ENCODE measurements at regions of chr16 and their contacts with region 1.

Region 1: GRCh38 chr16:67892899-67893742 is at the start of gene PSKH1:
- DNase-seq: peak; percentile 89 to 96 (median 93)
- ATAC-seq: peak; percentile 99
- H3K4me3 ChIP-seq: peak within 1 kb of the TSS; percentile 81 to 93
- H3K4me3 Mint-ChIP-seq: peak within 1 kb of the TSS; percentile 95
- H3K27ac ChIP-seq: peak within 1 kb of the TSS; percentile 90 to 93
- H3K27ac Mint-ChIP-seq: peak within 1 kb of the TSS; percentile 96
- H3K4me1 ChIP-seq: peaks cover 24% of the 10 kb centered on the region
- H3K4me1 Mint-ChIP-seq: peaks cover 40% of the 10 kb centered on the region
- H3K27me3 ChIP-seq: no peaks in the 10 kb centered on the region
- H3K27me3 Mint-ChIP-seq: no peaks in the 10 kb centered on the region
- CTCF ChIP-seq: no peak
- total RNA-seq, gene PSKH1: 13.3 to 13.4 TPM

Region 2: DNA sequence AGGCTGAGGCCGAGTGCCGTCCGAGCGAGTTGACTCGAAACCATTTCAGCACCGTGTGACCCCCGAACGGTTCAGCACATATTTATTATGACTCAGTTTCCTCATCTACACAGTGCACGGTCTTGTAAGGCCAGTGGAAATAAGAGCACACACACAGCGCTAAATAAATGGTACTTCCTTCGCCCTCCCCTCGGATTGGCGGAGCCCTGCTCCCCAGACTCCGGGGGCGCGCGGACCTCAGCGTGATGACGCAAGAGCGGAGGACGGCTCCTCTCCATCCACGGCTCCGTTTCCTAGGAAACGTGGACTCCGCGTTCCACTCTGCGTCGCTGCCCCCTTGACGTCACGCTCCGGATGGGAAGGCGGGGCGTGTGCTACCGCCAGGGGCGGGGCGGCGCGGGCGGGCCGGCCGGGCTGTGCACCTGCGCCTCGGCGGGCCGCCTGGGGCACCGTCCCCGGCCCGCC is 232.5 kb before region 1 on chr16 and contains the start of gene PARD6A:
- CTCF ChIA-PET with region 1: no interaction called
- POLR2A ChIA-PET with region 1: no interaction called
- intact Hi-C with region 1: loop called in 1 of 2 experiments (anchors 1 kb)
- DNase-seq: peak; percentile 89 to 99 (median 95)
- ATAC-seq: peak; percentile 76
- H3K4me3 ChIP-seq: peak within 1 kb of the TSS; percentile 83 to 100
- H3K4me3 Mint-ChIP-seq: peak within 1 kb of the TSS; percentile 94
- H3K27ac ChIP-seq: peak within 1 kb of the TSS; percentile 92 to 100
- H3K27ac Mint-ChIP-seq: peak within 1 kb of the TSS; percentile 93
- H3K4me1 ChIP-seq: peaks cover 20% of the 10 kb centered on the region
- H3K4me1 Mint-ChIP-seq: peaks cover 23% of the 10 kb centered on the region
- H3K27me3 ChIP-seq: no peaks in the 10 kb centered on the region
- H3K27me3 Mint-ChIP-seq: no peaks in the 10 kb centered on the region
- CTCF ChIP-seq: no peak
- total RNA-seq, gene PARD6A: 3.0 to 3.1 TPM

Region 3: DNA sequence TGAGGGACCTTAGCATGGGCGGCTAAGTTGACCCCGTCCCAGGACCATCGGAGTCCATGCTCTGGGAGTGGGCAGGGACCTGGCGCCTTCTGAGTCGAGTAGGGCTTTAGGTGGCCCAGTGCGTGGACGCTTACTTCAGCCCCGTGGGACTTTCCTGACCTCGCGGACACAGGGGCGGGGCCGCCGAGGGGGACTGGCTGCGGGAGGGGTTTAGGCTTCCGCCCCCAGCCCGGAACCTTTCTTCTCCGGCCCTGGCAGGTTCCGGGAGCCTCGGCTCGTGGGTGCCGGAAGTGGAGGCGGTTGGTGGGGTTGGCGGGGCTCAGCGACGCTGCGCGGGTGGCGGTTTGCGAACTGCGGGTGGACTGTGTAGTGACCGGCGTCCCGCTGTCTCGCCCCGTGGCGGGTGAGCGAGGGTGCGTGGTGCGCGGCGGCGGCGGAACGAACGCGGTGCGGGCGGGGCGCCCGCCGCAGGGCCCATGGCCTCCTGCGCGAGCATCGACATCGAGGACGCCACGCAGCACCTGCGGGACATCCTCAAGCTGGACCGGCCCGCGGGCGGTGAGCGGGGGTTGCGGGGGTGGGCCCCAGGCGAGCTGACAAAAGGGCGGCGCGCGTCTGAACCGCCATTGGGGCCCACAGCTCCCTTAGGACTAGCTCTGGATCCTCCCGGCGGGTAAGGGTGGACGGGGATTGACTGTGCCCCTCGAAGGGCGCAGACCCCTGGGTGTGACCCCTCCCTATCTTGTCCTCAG is 20.2 kb before region 1 on chr16 and contains the start of gene EDC4:
- CTCF ChIA-PET with region 1: no interaction called
- POLR2A ChIA-PET with region 1: interaction called, 3 read pairs
- intact Hi-C with region 1: loop called (anchors 1 to 2 kb)
- DNase-seq: peak; percentile 75 to 94 (median 86)
- ATAC-seq: peak; percentile 92
- H3K4me3 ChIP-seq: peak within 1 kb of the TSS; percentile 87 to 97
- H3K4me3 Mint-ChIP-seq: peak within 1 kb of the TSS; percentile 90
- H3K27ac ChIP-seq: peak within 1 kb of the TSS; percentile 78 to 83
- H3K27ac Mint-ChIP-seq: peak within 1 kb of the TSS; percentile 90
- H3K4me1 ChIP-seq: peaks cover 32% of the 10 kb centered on the region
- H3K4me1 Mint-ChIP-seq: peaks cover 32% of the 10 kb centered on the region
- H3K27me3 ChIP-seq: no peaks in the 10 kb centered on the region
- H3K27me3 Mint-ChIP-seq: no peaks in the 10 kb centered on the region
- CTCF ChIP-seq: no peak
- total RNA-seq, gene EDC4: 154 to 169 TPM

Region 4: GRCh38 chr16:67968400-67969253 is 75.5 kb after region 1 on chr16 and contains the start of gene SLC12A4:
- CTCF ChIA-PET with region 1: no interaction called
- POLR2A ChIA-PET with region 1: no interaction called
- intact Hi-C with region 1: loop called (anchors 1 to 2 kb)
- DNase-seq: peak; percentile 66 to 93 (median 86)
- ATAC-seq: peak; percentile 90
- H3K4me3 ChIP-seq: peak within 1 kb of the TSS; percentile 78 to 97
- H3K4me3 Mint-ChIP-seq: peak within 1 kb of the TSS; percentile 83
- H3K27ac ChIP-seq: peak within 1 kb of the TSS; percentile 44 to 59
- H3K27ac Mint-ChIP-seq: peak within 1 kb of the TSS; percentile 94
- H3K4me1 ChIP-seq: peaks cover 15% of the 10 kb centered on the region
- H3K4me1 Mint-ChIP-seq: peaks cover 21% of the 10 kb centered on the region
- H3K27me3 ChIP-seq: no peaks in the 10 kb centered on the region
- H3K27me3 Mint-ChIP-seq: no peaks in the 10 kb centered on the region
- CTCF ChIP-seq: no peak
- total RNA-seq, gene SLC12A4: 20.1 to 20.7 TPM

Region 5: GRCh38 chr16:68022704-68023522 is 129.8 kb after region 1 on chr16 and contains the starts of genes DDX28 and DUS2:
- CTCF ChIA-PET with region 1: no interaction called
- POLR2A ChIA-PET with region 1: no interaction called
- intact Hi-C with region 1: loop called in 1 of 2 experiments (anchors 1 kb)
- DNase-seq: peak; percentile 89 to 98 (median 94)
- ATAC-seq: peak; percentile 95
- H3K4me3 ChIP-seq: peak within 1 kb of the TSS; percentile 92 to 97
- H3K4me3 Mint-ChIP-seq: peak within 1 kb of the TSS; percentile 98
- H3K27ac ChIP-seq: peak within 1 kb of the TSS; percentile 86 to 88
- H3K27ac Mint-ChIP-seq: peak within 1 kb of the TSS; percentile 95
- H3K4me1 ChIP-seq: peaks cover 28% of the 10 kb centered on the region
- H3K4me1 Mint-ChIP-seq: peaks cover 36% of the 10 kb centered on the region
- H3K27me3 ChIP-seq: no peaks in the 10 kb centered on the region
- H3K27me3 Mint-ChIP-seq: no peaks in the 10 kb centered on the region
- CTCF ChIP-seq: no peak
- total RNA-seq, gene DDX28: 18.5 to 20.9 TPM
- total RNA-seq, gene DUS2: 9.5 TPM

Measured in CD8-positive, alpha-beta T cell (primary cell).